ENCODE measurements at regions of chr4 and their contacts with region 1.

Region 1: DNA sequence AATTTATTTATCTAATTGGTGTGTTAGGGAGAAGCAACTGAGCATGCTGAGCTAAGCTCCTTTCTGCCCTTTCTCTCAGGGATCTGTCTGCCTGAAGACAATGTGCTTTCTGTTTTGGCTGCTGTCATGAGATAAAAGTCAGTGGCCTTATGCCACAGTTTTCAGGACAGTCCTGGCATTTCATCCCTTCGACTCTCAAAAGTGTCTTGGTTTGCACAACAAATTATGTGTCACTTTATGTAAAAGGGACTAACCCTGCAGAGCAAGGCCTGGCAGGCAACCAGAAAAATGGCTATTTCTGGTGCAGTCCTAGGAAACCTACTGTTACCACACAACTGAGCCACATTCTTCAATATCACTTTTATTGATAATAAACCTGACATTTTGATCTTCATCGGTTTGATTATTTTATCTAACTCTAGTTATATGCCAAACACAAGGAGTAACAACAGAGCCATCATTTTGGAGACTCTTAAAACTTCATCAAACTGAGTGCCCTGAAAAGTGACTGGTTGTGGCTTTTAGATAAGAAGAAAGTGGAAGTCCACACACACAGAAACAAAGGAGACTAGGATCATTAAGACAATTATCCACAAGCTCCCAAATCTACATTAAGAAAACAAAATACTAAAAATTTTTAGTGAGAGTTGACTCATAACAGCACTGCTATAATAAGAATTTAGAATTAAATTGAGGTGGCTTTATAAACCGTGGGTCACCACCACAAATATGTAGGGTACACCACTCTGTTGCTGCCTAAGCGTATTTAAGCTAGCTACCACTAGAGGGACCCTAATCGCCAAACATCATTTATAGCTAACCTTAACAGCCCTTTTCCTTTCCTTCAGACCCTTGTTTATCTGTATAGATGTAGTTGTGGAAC is 95.9 kb upstream of the PTPN13 start:
- DNase-seq: no peak
- H3K4me3 Mint-ChIP-seq: no peak overlapping the region
- H3K27ac Mint-ChIP-seq: no peak overlapping the region
- H3K4me1 Mint-ChIP-seq: peaks cover 23% of the 10 kb centered on the region
- H3K27me3 Mint-ChIP-seq: peaks cover 23% of the 10 kb centered on the region

Region 2: GRCh38 chr4:86398187-86398586 is 100.0 kb before region 1 on chr4:
- intact Hi-C with region 1: no loop called
- DNase-seq: no peak
- H3K4me3 Mint-ChIP-seq: no peak overlapping the region
- H3K27ac Mint-ChIP-seq: no peak overlapping the region
- H3K4me1 Mint-ChIP-seq: no peaks in the 10 kb centered on the region
- H3K27me3 Mint-ChIP-seq: no peaks in the 10 kb centered on the region

Region 3: DNA sequence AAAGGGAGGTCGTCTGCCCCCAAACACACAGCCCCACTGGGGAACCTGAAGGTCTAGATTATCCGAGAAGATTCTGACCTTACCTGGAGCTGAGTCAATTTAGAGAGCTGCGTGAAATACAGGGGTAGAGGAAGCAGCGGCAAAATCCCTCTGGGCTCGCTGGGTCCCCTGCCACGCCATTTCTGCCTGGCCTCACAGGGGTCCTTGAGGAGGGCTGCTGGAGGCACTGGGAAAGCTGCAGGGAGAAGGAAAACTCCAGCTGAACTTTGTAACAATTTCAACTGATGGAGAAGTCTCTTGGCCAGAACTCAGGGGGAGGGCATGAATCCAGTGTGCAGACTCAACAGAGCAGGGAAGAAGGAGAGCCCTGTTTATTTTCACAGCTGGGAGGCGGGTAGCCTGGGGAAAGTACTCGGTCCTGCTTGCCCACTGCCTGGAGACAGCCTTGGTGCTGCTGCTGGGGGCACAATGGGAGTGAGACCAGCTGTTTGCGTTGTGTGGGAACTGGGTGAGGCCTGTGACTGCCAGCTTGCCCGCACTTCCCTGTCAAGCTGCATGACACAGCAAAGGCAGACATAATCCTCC is 45.2 kb before region 1 on chr4:
- intact Hi-C with region 1: loop called (anchors 1 kb)
- DNase-seq: no peak
- H3K4me3 Mint-ChIP-seq: no peak overlapping the region
- H3K27ac Mint-ChIP-seq: no peak overlapping the region
- H3K4me1 Mint-ChIP-seq: no peaks in the 10 kb centered on the region
- H3K27me3 Mint-ChIP-seq: peaks cover 7% of the 10 kb centered on the region

Region 4: GRCh38 chr4:86544310-86544966 is 46.2 kb after region 1 on chr4:
- intact Hi-C with region 1: loop called (anchors 2 kb)
- DNase-seq: peak; percentile 7
- H3K4me3 Mint-ChIP-seq: peak overlapping the region; percentile 75
- H3K27ac Mint-ChIP-seq: peak overlapping the region; percentile 96
- H3K4me1 Mint-ChIP-seq: peaks cover 39% of the 10 kb centered on the region
- H3K27me3 Mint-ChIP-seq: peaks cover 5% of the 10 kb centered on the region

Region 5: GRCh38 chr4:86593688-86594558 is 95.7 kb after region 1 on chr4 and contains the start of gene PTPN13:
- intact Hi-C with region 1: loop called (anchors 2 kb)
- DNase-seq: peak; percentile 45
- H3K4me3 Mint-ChIP-seq: peak within 1 kb of the TSS; percentile 74
- H3K27ac Mint-ChIP-seq: peak within 1 kb of the TSS; percentile 69
- H3K4me1 Mint-ChIP-seq: peaks cover 8% of the 10 kb centered on the region
- H3K27me3 Mint-ChIP-seq: peaks cover 47% of the 10 kb centered on the region
- total RNA-seq, gene PTPN13: 0.44 and 0.66 TPM in 2 replicates

Region 6: GRCh38 chr4:86685401-86685800 is 187.2 kb after region 1 on chr4:
- intact Hi-C with region 1: loop called (anchors 10 kb)
- DNase-seq: no peak
- H3K4me3 Mint-ChIP-seq: no peak overlapping the region
- H3K27ac Mint-ChIP-seq: no peak overlapping the region
- H3K4me1 Mint-ChIP-seq: no peaks in the 10 kb centered on the region
- H3K27me3 Mint-ChIP-seq: peaks cover 2% of the 10 kb centered on the region

Region 7: DNA sequence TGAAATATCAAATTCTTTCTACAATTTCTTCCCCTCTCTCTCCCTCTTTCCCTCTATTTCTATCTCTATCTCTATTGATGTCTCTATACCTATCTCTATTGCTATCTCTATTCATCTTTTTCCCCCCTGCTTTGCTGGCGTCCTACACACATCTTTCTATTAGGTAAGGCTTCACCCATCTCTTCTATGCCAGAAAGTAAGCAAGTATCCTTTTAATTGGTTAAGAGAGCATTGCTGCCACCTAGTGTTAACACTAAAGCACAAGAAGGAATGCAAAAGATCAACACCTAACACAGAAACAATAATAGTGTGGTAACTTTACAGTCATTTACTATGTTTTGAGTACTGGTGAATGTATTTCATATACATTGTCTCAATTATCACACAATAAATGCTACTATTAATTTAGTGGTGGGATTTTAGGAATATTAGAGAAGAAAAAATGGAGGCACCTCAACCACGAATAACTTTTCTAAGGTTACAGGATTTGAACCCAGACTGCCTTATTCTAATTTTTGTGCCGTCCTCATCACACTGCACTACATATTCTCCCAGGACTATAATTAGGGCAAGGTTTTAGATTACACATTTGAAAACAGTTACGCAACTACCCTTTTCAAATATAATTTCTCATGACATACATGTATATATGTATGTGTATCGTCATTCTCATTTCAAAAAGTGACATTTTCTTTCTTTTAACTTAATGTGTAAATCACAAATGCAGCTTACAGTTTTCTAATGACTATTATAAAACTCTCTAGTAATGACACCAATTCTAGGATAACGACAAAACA is 397.7 kb after region 1 on chr4:
- intact Hi-C with region 1: loop called (anchors 1 kb)
- DNase-seq: peak; percentile 4
- H3K4me3 Mint-ChIP-seq: no peak overlapping the region
- H3K27ac Mint-ChIP-seq: no peak overlapping the region
- H3K4me1 Mint-ChIP-seq: no peaks in the 10 kb centered on the region
- H3K27me3 Mint-ChIP-seq: peaks cover 26% of the 10 kb centered on the region

Region 8: DNA sequence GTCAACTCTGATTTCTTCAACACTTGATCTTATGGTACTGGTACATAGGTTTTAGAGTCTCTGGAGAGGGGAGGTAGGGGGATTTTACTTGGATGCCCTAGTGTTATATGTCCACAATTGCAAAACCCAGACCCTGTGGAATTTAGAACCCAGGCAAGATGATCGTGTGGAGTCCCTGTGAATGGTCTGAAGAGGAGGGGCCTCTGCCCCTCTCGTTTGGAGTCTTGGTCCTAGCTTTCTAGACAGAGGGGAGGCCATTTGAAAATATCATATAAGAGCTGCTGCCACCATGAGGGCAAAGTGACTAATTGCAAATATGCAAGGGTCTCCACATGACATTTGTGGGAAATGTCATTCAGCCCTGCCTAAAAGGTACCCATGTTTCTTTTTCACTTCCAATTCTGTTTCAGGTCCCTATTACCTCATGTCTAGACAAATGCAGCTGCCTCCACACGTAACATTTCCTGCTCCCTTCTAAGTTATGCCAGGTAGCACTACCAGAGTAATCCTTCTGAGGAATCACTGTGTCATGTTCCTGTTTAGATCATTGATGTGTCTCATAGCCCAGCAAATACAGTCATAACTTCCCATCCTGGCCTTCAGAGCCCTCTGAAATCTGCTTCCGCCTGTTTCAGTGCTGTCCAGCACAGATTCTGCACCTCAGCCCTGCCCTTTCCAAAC is 595.4 kb after region 1 on chr4:
- intact Hi-C with region 1: loop called (anchors 5 kb)
- DNase-seq: peak; percentile 22
- H3K4me3 Mint-ChIP-seq: no peak overlapping the region
- H3K27ac Mint-ChIP-seq: peak overlapping the region; percentile 62
- H3K4me1 Mint-ChIP-seq: peaks cover 25% of the 10 kb centered on the region
- H3K27me3 Mint-ChIP-seq: no peaks in the 10 kb centered on the region